ENCODE measurements at regions of chr19 and their contacts with region 1.

Region 1: GRCh38 chr19:21698215-21698614 is 69.2 kb downstream of the ZNF100 start:
- DNase-seq: no peak
- ATAC-seq: peak in 1 of 4 donors; percentile 43
- H3K4me3 ChIP-seq: no peak overlapping the region
- H3K27ac ChIP-seq: no peak overlapping the region
- H3K4me1 ChIP-seq: peaks cover 0 to 6% (median 0%) of the 10 kb centered on the region in 12 donors
- H3K27me3 ChIP-seq: no peaks in the 10 kb centered on the region
- CTCF ChIP-seq: peak; percentile 55 to 75 (median 67)
- POLR2A ChIP-seq: no peak

Region 2: GRCh38 chr19:21482863-21483276 is 215.3 kb before region 1 on chr19:
- intact Hi-C with region 1: loop called in 7 of 10 experiments (anchors 2 to 10 kb)
- DNase-seq: peak; percentile 36 to 80 (median 62)
- ATAC-seq: peak; percentile 80 to 96 (median 92)
- H3K4me3 ChIP-seq: peak overlapping the region in 4 of 12 donors; percentile 7 to 38 (median 32)
- H3K27ac ChIP-seq: peak overlapping the region in 1 of 12 donors; percentile 44
- H3K4me1 ChIP-seq: no peaks in the 10 kb centered on the region
- H3K27me3 ChIP-seq: no peaks in the 10 kb centered on the region
- CTCF ChIP-seq: peak; percentile 65 to 95 (median 87)
- POLR2A ChIP-seq: no peak

Region 3: DNA sequence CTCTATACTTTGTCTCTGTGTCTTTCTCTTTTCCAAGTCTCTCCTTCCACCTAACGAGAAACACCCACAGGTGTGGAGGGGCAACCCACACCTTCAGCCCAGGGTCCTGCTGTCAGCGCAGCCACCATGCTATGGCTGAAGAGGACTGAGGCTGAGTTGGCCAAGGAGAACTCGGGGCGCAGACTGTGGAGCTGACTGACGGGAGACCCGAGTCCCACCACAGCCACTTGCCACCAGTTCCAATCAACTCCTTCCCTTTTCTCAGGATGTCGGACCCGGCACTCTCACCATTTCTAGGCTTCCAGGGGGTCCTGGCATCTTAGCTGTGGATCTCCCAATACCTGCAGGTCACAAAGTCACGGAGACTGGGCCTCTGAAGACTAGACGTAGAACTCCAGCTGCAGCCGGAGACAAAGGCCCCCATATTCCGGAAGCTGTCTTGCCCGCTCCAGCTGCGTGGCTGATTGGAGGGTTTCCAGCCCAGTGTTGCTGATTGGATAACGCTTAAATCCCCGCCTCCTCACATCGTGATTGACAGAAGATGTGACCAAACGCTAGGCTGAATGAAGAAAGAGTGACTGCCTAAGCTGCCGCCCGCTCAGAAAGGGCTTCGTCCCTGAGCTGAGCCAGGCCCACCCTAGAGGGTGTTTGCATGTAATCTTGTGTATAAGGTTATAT is 129.3 kb before region 1 on chr19:
- intact Hi-C with region 1: loop called in 1 of 10 experiments (anchors 10 kb)
- DNase-seq: peak; percentile 91 to 97 (median 92)
- ATAC-seq: peak; percentile 99
- H3K4me3 ChIP-seq: peak overlapping the region; percentile 15 to 79 (median 53)
- H3K27ac ChIP-seq: peak overlapping the region in 10 of 12 donors; percentile 8 to 89 (median 72)
- H3K4me1 ChIP-seq: peaks cover 0 to 31% (median 2%) of the 10 kb centered on the region in 12 donors
- H3K27me3 ChIP-seq: no peaks in the 10 kb centered on the region
- CTCF ChIP-seq: no peak
- POLR2A ChIP-seq: peak in 1 of 2 donors; percentile 32

Region 4: GRCh38 chr19:21674454-21674853 is 23.8 kb before region 1 on chr19:
- intact Hi-C with region 1: no loop called
- DNase-seq: no peak
- ATAC-seq: no peak
- H3K4me3 ChIP-seq: no peak overlapping the region
- H3K27ac ChIP-seq: peak overlapping the region in 3 of 12 donors; percentile 16 to 24 (median 18)
- H3K4me1 ChIP-seq: peaks cover 0 to 8% (median 0%) of the 10 kb centered on the region in 12 donors
- H3K27me3 ChIP-seq: peaks cover 0 to 7% (median 0%) of the 10 kb centered on the region in 9 donors
- CTCF ChIP-seq: no peak
- POLR2A ChIP-seq: no peak